GM10248 (cell line): ENCODE measurements at regions of chr6 and their contacts with region 1.

Region 1: DNA sequence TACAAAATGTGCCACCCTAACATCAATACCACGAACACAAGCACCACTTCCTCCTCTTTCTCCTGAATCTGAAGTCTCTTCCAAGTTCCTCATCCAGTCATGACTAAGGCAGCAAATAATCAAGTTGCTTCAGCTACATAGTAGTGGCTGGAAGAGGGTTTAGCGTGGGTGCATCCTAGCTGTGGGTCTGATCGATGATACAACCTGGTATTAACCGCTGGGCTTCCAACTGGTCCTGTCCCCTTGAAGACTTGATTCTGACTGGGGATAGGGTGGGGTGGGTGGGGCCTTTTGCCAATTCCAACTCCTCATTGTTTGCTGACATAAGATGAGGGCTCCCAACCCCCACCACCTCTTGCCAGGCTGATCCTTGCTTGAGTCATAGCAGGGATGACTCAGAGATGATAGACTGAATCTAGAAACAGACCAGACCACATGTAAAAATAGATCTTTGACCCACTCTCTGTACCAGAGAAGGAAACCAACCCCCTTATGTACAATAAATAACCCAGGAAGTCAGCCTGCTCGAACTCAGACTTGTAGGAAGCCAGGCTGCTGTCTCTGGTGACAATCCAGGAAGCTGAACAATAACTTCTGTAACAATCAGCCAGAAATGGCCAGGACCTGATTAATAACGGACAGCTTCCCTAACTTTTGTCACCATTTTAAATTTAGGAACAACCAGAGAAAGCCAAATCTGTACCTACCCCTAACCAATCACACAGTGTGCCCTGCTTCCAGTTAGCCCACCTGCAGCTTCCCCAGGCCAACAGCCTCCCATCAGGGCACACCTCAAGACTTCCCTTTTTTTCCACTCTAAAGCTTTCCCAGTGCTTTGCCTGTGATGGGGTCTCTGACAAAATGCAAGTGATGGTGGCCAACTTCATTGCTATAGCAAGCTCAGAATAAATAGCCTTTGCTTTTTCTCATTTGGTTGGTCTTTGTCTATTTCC is 68.9 kb upstream of the FAM184A start:
- DNase-seq: peak; percentile 67
- CTCF ChIP-seq: no peak

Region 2: GRCh38 chr6:118649918-118650581 is 497.3 kb before region 1 on chr6:
- CTCF ChIA-PET with region 1: no interaction called
- POLR2A ChIA-PET with region 1: no interaction called
- DNase-seq: no peak
- CTCF ChIP-seq: no peak

Region 3: GRCh38 chr6:119129148-119129967 is 18.0 kb before region 1 on chr6:
- CTCF ChIA-PET with region 1: interaction called, 83 read pairs
- POLR2A ChIA-PET with region 1: no interaction called
- DNase-seq: peak; percentile 57
- CTCF ChIP-seq: peak; percentile 78

Region 4: DNA sequence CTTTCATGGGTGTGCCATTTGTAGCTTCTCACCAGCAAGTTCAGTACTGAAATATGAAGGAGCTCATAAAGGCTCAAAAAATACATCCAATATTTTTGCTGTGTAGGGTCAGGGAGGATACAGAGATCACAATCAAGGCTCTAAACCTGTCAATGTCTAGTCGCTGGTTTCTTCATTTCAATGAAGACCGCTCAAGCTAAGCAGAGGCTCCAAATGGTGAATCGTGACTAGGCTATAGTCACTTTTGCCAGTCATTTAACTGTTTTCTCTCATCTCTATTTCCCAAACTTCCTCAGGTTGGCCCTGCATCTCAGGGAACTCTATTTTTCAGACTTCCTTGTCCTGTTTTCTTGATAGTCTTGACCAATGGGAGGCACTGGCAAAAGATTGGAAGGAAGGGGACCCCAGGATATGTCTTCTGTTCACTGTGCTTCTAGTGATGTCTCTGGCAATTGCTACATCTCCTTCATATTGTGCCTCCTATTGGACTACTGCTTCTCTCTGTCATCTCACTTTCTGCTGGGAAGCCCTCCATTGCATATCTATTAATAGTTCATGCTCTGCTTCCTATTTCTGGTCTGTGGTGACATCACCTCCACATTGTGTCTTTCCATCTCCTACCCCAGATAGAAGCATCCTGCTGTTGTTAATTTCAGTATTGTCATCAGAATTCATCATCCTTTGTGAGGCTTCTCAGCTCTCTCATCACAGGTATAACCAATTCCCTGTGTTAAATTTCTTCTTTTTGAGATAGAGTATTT is 18.8 kb after region 1 on chr6:
- CTCF ChIA-PET with region 1: interaction called, 13 read pairs
- POLR2A ChIA-PET with region 1: no interaction called
- DNase-seq: no peak
- CTCF ChIP-seq: no peak

Region 5: DNA sequence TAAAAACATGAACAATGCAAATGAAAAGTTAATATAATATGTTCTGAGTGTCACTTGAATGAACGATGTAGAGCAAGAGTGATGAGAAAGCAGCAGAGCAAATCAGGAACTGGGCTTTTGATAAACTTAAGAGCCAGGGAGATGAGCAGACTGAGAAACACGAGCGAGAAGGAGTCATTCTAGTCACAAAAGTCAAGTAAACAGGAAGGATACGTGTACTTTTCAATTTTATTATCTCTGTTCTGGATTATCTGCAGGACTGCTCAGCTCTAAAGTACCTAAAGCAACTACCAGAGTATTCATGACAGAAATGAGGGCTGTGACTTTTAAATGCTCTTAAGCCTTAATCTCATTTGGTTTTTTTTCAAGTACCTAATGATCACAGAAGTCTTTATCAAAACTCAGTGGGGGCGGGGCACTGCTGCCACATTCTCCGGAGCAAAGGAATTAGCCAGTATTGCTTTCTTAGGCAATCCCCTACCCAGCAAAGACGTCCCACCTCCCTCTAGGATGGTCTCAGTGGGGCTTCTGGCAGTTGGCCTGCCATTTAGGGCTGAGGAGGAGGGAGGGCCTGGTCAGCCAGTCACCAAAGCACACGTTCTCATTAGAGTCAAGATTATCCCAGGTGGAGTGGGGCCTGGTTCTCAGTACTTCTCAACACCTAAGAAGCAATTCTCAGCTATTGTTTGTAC is 193.6 kb after region 1 on chr6:
- CTCF ChIA-PET with region 1: interaction called, 11 read pairs
- POLR2A ChIA-PET with region 1: interaction called, 3 read pairs
- DNase-seq: no peak
- CTCF ChIP-seq: no peak